OCI-LY7 (cell line): ENCODE measurements at regions of chr3 and their contacts with region 1.

Region 1: GRCh38 chr3:32510075-32510724 is 7.5 kb upstream of the CMTM6 start:
- DNase-seq: peak; percentile 78
- H3K4me3 ChIP-seq: no peak overlapping the region
- H3K27ac ChIP-seq: no peak overlapping the region
- H3K4me1 ChIP-seq: no peaks in the 10 kb centered on the region
- CTCF ChIP-seq: peak; percentile 92

Region 2: DNA sequence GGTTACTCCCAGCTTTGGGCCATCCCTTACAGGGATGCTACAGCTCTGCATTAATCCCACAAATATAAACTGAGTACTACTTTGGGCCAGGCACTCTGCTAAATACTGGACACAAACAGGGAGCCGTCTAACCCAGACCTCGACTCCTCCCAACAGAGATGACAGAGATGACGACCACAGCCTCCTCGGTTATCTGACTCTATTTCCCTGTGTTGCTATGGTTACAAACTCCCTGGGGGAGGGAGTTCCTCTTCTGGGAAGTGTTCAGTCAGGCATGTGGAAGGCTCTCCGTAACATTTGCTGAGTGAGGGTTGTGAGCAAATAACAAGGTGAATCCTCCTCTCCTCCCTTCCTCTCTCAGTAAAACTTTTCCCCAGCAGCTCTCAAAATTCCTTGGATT is 125.3 kb before region 1 on chr3:
- CTCF ChIA-PET with region 1: no interaction called
- POLR2A ChIA-PET with region 1: no interaction called
- intact Hi-C with region 1: no loop called
- DNase-seq: no peak
- H3K4me3 ChIP-seq: no peak overlapping the region
- H3K27ac ChIP-seq: no peak overlapping the region
- H3K4me1 ChIP-seq: peaks cover 31% of the 10 kb centered on the region
- CTCF ChIP-seq: no peak

Region 3: DNA sequence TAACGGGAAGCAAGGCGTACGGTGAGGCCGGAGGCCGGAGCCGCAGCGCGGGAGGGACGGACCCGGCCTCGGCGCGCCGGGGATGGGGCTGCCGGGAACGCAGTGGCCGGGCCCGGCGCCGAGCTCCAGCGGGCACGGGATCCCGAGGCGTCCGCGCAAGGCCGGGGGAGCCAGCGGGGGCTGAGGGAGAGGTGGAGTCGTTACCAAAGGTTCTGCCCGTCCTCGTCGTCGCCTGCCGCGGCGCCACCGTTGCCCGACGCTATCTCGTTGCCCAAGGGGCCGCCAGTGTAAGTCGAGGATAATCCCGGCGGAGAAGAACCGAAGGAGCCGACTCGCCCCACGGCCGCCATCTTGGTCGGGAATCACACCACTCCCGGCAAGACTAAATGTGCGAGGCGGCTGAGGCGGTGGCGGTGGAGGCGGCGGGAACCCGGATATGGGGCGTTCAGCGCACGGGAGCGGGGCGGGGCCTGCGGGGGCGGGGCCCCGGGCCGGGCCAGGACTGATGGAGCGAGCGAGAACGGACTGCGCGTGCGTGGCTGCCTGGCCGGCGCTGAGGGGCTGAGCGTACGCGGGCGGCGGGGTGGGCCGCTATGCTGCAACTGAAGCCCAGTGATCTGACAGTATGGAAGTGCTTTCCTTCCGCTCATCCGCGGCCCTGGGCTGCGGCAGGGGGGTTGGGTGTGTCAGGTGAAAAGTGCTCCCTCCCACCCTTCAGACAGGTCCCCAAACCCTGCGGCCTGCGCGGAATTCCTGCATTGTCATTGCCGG is 60.4 kb after region 1 on chr3 and contains the start of gene DYNC1LI1:
- CTCF ChIA-PET with region 1: no interaction called
- POLR2A ChIA-PET with region 1: no interaction called
- intact Hi-C with region 1: loop called (anchors 5 kb)
- DNase-seq: peak; percentile 93
- H3K4me3 ChIP-seq: peak within 1 kb of the TSS; percentile 81
- H3K27ac ChIP-seq: peak within 1 kb of the TSS; percentile 64
- H3K4me1 ChIP-seq: peaks cover 23% of the 10 kb centered on the region
- CTCF ChIP-seq: no peak
- total RNA-seq, gene DYNC1LI1: 28.6 TPM in 2 replicates

Region 4: DNA sequence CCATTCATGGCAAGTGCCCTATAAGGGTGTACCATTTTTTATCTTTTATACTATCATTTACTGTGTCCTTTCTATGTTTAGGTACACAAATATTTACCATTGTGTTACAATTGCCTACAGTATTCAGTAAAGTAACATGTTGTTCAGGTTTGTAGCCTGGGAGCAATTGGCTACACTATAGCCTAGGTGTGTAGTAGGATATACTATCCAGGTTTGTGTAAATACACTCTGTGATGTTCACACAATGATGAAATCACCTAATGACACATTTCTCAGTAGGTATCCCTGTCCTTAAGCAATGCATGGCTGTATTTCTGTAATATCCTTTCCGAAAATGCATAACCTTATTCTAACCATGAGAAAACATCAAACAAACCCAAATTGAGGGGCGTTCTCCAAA is 156.9 kb after region 1 on chr3:
- CTCF ChIA-PET with region 1: no interaction called
- POLR2A ChIA-PET with region 1: interaction called, 4 read pairs
- intact Hi-C with region 1: loop called (anchors 1 kb)
- DNase-seq: no peak
- H3K4me3 ChIP-seq: no peak overlapping the region
- H3K27ac ChIP-seq: no peak overlapping the region
- H3K4me1 ChIP-seq: no peaks in the 10 kb centered on the region
- CTCF ChIP-seq: no peak

Region 5: DNA sequence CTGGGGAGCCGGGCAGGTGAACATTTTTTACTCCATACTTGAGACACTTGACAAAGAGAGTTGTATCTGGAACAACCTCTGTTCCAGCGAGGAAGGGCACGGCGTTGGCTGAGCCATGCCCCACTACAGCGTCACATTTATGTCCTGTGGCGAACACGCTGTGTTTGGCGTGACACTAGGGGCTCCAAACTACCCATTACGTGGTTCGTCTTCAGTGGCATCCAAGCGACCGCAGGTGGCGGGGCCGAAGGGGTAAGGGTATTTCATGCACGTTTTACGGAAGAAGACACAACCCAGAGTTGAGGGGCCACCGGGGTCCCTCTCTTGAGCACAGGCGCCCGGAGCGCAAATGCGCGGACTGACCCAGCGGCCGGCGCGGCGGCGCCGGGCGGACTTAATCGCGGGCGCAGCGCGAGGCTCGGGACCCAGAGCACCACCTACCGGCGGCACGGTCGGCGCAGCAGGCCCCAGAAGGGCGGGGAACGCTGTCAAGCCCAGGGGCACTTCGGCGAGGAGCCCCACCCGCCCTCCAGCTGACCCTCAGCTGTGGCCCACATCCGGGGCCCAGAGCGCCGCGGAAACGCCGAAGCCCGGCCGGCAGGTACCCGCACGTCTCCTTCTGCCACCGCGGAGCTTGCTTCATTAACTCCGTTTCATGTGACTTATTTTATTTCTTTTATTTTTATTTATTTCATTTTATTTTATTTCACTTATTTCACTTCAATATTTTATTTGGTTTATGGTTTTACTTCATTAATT is 271.2 kb after region 1 on chr3:
- CTCF ChIA-PET with region 1: no interaction called
- POLR2A ChIA-PET with region 1: no interaction called
- intact Hi-C with region 1: loop called (anchors 2 kb)
- DNase-seq: peak; percentile 80
- H3K4me3 ChIP-seq: peak overlapping the region; percentile 67
- H3K27ac ChIP-seq: no peak overlapping the region
- H3K4me1 ChIP-seq: no peaks in the 10 kb centered on the region
- CTCF ChIP-seq: peak; percentile 87

Region 6: DNA sequence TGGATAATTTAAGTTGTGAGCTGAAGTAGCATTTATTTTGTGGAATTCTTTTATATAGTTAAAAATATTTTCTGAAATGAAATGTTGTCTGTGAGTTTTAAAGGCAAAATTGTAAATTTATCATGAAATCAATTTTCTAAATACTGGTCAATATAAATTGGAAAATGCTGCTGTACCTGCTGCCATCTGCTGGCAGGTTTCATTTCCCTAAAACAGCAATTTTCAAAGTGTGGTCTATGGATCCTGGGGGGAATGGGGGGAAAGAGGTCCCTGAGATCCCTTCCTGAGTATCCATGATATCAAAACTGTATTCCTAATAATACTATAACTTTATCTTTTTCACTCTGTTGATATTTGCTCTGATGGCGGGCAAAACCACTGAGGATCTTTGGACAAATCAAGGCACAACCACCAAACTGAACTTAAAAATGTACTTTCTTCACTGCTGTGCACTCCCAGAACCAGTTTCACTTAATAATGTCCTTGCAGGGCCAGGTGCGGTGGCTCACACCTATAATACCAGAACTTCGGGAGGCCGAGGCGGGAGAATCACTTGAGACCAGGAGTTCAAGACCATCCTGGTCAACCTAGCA is 424.0 kb after region 1 on chr3:
- CTCF ChIA-PET with region 1: no interaction called
- POLR2A ChIA-PET with region 1: no interaction called
- intact Hi-C with region 1: loop called (anchors 5 kb)
- DNase-seq: peak; percentile 20
- H3K4me3 ChIP-seq: no peak overlapping the region
- H3K27ac ChIP-seq: no peak overlapping the region
- H3K4me1 ChIP-seq: no peaks in the 10 kb centered on the region
- CTCF ChIP-seq: peak; percentile 87

Region 7: GRCh38 chr3:33074217-33075067 is 564.2 kb after region 1 on chr3:
- CTCF ChIA-PET with region 1: no interaction called
- POLR2A ChIA-PET with region 1: interaction called, 3 read pairs
- intact Hi-C with region 1: loop called (anchors 5 kb)
- DNase-seq: peak; percentile 80
- H3K4me3 ChIP-seq: no peak overlapping the region
- H3K27ac ChIP-seq: no peak overlapping the region
- H3K4me1 ChIP-seq: no peaks in the 10 kb centered on the region
- CTCF ChIP-seq: peak; percentile 98